Activated naive CD4-positive, alpha-beta T cell treated with anti-CD3 and anti-CD28 coated beads for 36 hours (primary cell): ENCODE measurements at regions of chr5 and their contacts with region 1.

Region 1: GRCh38 chr5:126449751-126450271 is 26.6 kb downstream of the GRAMD2B start:
- DNase-seq: peak; percentile 90
- H3K4me3 Mint-ChIP-seq: peak overlapping the region; percentile 82
- H3K27ac Mint-ChIP-seq: peak overlapping the region; percentile 100
- H3K4me1 Mint-ChIP-seq: peaks cover 81% of the 10 kb centered on the region
- H3K27me3 Mint-ChIP-seq: no peaks in the 10 kb centered on the region

Region 2: GRCh38 chr5:124583469-124584350 is 1866.1 kb before region 1 on chr5:
- CTCF ChIA-PET with region 1: no interaction called
- intact Hi-C with region 1: loop called (anchors 5 kb)
- DNase-seq: peak; percentile 26
- H3K4me3 Mint-ChIP-seq: no peak overlapping the region
- H3K27ac Mint-ChIP-seq: no peak overlapping the region
- H3K4me1 Mint-ChIP-seq: peaks cover 17% of the 10 kb centered on the region
- H3K27me3 Mint-ChIP-seq: no peaks in the 10 kb centered on the region

Region 3: DNA sequence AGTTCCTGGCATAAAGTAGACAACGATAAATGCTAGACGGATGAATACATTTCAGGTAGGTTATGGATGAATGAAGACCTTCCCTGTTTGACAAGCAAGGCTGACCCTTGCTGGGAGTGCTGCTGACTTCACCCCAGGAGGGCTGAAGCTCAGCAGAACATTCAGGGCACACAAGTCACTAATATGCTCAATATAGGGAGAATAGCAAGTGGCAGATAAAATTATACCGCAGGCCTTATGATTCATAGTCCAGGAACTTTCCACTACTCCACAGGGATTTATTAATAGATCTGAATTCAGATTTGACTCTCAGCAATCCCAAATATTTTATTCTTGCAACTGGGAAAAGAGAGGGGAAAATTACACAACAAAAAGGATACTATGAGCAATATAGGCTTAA is 64.8 kb before region 1 on chr5:
- CTCF ChIA-PET with region 1: no interaction called
- intact Hi-C with region 1: no loop called
- DNase-seq: no peak
- H3K4me3 Mint-ChIP-seq: no peak overlapping the region
- H3K27ac Mint-ChIP-seq: no peak overlapping the region
- H3K4me1 Mint-ChIP-seq: no peaks in the 10 kb centered on the region
- H3K27me3 Mint-ChIP-seq: no peaks in the 10 kb centered on the region

Region 4: DNA sequence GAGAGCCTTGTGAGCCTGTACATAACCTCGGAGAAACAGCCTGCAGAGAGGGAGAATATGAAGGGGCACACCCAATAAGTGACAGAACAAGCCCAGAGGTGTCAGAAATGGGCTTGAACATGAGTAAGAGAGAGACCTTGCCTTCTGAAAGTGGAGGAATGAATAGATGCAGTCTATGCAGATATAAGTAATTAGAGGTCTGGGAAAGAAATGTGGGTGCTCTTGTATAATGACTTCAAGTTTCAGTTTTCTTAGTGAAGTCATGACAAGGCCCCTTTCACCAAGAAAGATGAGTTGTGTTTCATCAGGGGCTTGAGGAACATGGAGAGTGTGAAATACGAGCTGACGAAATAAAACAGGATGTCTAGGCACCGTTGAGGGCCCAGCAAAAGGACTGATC is 11.5 kb before region 1 on chr5:
- CTCF ChIA-PET with region 1: interaction called, 3 read pairs
- intact Hi-C with region 1: loop called (anchors 1 kb)
- DNase-seq: no peak
- H3K4me3 Mint-ChIP-seq: no peak overlapping the region
- H3K27ac Mint-ChIP-seq: peak overlapping the region; percentile 77
- H3K4me1 Mint-ChIP-seq: peaks cover 31% of the 10 kb centered on the region
- H3K27me3 Mint-ChIP-seq: no peaks in the 10 kb centered on the region

Region 5: DNA sequence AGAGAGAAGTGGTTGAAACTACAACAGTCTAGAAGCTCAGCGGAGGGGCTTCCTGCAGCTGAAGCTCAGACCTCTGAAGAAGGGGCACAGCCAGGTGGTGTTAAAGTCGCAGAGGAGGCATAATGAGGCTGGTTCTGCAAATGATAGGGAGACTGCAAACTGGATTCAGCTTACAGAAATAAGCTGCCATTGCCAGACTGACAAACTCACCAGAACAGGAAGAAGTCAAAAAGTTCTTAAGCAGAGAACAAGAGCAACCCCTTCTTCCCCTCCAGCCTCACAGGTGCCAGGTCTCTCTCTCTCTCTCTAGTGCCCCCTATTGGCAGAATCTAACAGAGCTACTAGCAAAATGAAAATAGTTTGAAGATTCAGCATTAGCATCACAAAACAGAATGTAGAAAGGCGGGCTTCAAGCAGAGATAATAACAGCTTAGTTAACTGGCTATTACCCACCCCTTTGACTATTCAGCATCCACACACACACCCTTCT is 50.1 kb after region 1 on chr5:
- CTCF ChIA-PET with region 1: interaction called, 5 read pairs
- intact Hi-C with region 1: loop called (anchors 1 kb)
- DNase-seq: peak; percentile 43
- H3K4me3 Mint-ChIP-seq: no peak overlapping the region
- H3K27ac Mint-ChIP-seq: no peak overlapping the region
- H3K4me1 Mint-ChIP-seq: peaks cover 18% of the 10 kb centered on the region
- H3K27me3 Mint-ChIP-seq: no peaks in the 10 kb centered on the region

Region 6: GRCh38 chr5:126745259-126745992 is 295.6 kb after region 1 on chr5:
- CTCF ChIA-PET with region 1: no interaction called
- intact Hi-C with region 1: loop called (anchors 1 kb)
- DNase-seq: no peak
- H3K4me3 Mint-ChIP-seq: no peak overlapping the region
- H3K27ac Mint-ChIP-seq: peak overlapping the region; percentile 24
- H3K4me1 Mint-ChIP-seq: peaks cover 41% of the 10 kb centered on the region
- H3K27me3 Mint-ChIP-seq: no peaks in the 10 kb centered on the region

Region 7: DNA sequence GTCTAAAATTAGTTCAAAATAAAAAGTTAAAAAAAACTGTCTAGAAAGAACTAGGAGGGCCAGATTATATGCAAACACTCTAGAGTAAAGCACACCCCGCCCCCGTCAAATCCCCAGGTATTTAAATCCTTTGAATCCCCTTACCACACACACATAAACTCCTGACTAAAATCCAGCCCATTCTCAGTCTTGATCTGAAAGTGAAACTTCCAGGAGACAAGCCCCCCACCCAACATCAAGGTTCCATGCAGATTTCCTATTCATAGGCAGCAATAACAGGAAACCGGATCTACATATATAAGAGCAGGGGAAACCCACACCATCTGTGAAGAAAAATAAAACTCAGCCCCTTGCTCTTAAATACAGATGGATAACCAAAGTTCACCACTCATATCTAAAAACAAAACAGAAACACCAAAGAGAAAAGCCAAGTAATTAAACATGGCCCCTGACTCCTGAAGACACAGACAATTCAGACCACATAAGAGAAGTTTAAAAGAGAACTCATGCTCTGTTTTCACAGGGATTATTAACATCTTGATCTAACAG is 538.3 kb after region 1 on chr5:
- CTCF ChIA-PET with region 1: no interaction called
- intact Hi-C with region 1: loop called (anchors 1 kb)
- DNase-seq: peak; percentile 77
- H3K4me3 Mint-ChIP-seq: peak overlapping the region; percentile 20
- H3K27ac Mint-ChIP-seq: peak overlapping the region; percentile 76
- H3K4me1 Mint-ChIP-seq: peaks cover 51% of the 10 kb centered on the region
- H3K27me3 Mint-ChIP-seq: no peaks in the 10 kb centered on the region